ENCODE measurements at regions of chr16 and their contacts with region 1.

Region 1: GRCh38 chr16:70380861-70381603 is 34.3 kb downstream of the DDX19A start:
- DNase-seq: peak; percentile 98
- ATAC-seq: peak; percentile 93
- H3K4me3 Mint-ChIP-seq: peak overlapping the region; percentile 86
- H3K27ac Mint-ChIP-seq: peak overlapping the region; percentile 91
- H3K4me1 Mint-ChIP-seq: peaks cover 12% of the 10 kb centered on the region
- H3K27me3 Mint-ChIP-seq: no peaks in the 10 kb centered on the region

Region 2: GRCh38 chr16:69880640-69881133 is 500.3 kb before region 1 on chr16:
- CTCF ChIA-PET with region 1: no interaction called
- POLR2A ChIA-PET with region 1: no interaction called
- intact Hi-C with region 1: no loop called
- DNase-seq: no peak
- ATAC-seq: no peak
- H3K4me3 Mint-ChIP-seq: no peak overlapping the region
- H3K27ac Mint-ChIP-seq: no peak overlapping the region
- H3K4me1 Mint-ChIP-seq: no peaks in the 10 kb centered on the region
- H3K27me3 Mint-ChIP-seq: no peaks in the 10 kb centered on the region

Region 3: DNA sequence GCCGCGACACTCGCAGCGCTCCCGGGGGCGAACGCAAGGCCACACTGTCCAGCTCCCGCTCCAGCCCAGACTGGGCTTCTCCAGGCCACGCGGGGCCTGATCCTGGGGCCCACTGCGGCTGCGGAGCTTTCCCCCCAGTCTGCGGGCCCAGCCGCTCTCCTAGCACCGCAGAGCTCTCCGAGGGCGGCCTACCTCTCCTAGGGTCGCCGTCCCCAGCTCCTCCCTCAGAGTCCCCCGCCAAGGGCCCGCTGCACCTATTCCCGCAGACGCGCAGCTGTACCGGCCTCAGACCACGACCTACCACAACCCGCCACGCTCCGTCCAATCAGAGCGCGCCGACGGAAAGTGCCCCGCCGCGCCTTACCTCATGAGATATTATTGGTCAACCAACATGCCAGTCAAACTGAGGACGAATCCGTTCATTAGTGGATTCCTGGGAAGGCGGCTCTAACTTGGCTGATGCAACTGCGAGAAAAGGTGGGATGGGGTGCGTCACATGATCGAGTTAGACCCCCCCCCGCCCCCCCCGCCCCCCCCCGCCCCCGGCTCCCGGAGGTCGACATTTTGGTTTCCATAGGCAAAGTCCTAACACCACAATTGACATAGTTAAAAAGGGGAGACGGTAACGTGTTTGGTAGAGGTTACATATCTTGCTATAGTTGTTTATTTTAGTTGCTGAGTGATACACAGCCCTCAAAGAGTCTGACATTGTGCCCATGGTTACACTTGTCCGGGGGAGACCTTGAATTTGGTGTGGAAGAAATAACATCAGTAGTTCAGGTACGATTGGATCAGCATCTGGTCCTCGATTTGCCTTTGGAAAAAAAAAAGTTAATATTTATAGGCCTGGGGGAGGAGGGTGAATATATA is 91.6 kb before region 1 on chr16 and contains the start of gene AARS1:
- CTCF ChIA-PET with region 1: no interaction called
- POLR2A ChIA-PET with region 1: interaction called, 5 read pairs
- intact Hi-C with region 1: loop called in 1 of 2 experiments (anchors 1 kb)
- DNase-seq: peak; percentile 96
- ATAC-seq: peak; percentile 99
- H3K4me3 Mint-ChIP-seq: peak within 1 kb of the TSS; percentile 92
- H3K27ac Mint-ChIP-seq: peak within 1 kb of the TSS; percentile 96
- H3K4me1 Mint-ChIP-seq: peaks cover 37% of the 10 kb centered on the region
- H3K27me3 Mint-ChIP-seq: no peaks in the 10 kb centered on the region
- total RNA-seq, gene AARS1: 180 to 189 TPM

Region 4: GRCh38 chr16:70402916-70403659 is 22.1 kb after region 1 on chr16:
- CTCF ChIA-PET with region 1: no interaction called
- POLR2A ChIA-PET with region 1: interaction called, 4 read pairs
- intact Hi-C with region 1: loop called (anchors 1 kb)
- DNase-seq: no peak
- ATAC-seq: no peak
- H3K4me3 Mint-ChIP-seq: no peak overlapping the region
- H3K27ac Mint-ChIP-seq: no peak overlapping the region
- H3K4me1 Mint-ChIP-seq: peaks cover 33% of the 10 kb centered on the region
- H3K27me3 Mint-ChIP-seq: no peaks in the 10 kb centered on the region

Region 5: GRCh38 chr16:70438969-70439862 is 58.2 kb after region 1 on chr16 and contains the start of gene ST3GAL2:
- CTCF ChIA-PET with region 1: no interaction called
- POLR2A ChIA-PET with region 1: interaction called, 4 read pairs
- intact Hi-C with region 1: loop called (anchors 1 kb)
- DNase-seq: peak; percentile 97
- ATAC-seq: peak; percentile 97
- H3K4me3 Mint-ChIP-seq: peak within 1 kb of the TSS; percentile 96
- H3K27ac Mint-ChIP-seq: peak within 1 kb of the TSS; percentile 89
- H3K4me1 Mint-ChIP-seq: peaks cover 33% of the 10 kb centered on the region
- H3K27me3 Mint-ChIP-seq: no peaks in the 10 kb centered on the region
- total RNA-seq, gene ST3GAL2: 14.8 to 16.6 TPM

Region 6: DNA sequence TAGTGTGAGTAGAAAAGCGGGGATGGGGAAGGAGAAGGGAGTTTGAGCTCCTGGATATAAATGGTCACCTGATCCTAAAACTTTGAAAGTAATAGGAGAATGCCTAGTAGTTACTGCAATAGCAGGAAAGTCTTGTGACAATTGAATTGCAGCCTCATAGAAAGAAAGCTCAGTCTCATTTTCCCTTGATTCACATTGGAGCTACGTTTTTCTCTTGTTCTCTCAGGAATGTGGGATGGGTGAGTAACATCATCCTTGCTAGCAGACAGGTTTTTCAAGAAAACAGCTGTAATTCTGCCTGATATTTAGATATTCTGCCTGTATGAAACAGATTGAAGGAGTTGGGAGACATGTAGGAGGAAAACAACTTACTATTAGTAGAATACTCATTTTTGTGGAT is 167.9 kb after region 1 on chr16:
- CTCF ChIA-PET with region 1: no interaction called
- POLR2A ChIA-PET with region 1: no interaction called
- intact Hi-C with region 1: no loop called
- DNase-seq: no peak
- ATAC-seq: no peak
- H3K4me3 Mint-ChIP-seq: no peak overlapping the region
- H3K27ac Mint-ChIP-seq: peak overlapping the region; percentile 62
- H3K4me1 Mint-ChIP-seq: peaks cover 14% of the 10 kb centered on the region
- H3K27me3 Mint-ChIP-seq: no peaks in the 10 kb centered on the region

Measured in activated CD4-positive, alpha-beta T cell treated with anti-CD3 and anti-CD28 coated beads for 36 hours (primary cell).